SK-N-SH (cell line): ENCODE measurements at regions of chr2 and their contacts with region 1.

Region 1: DNA sequence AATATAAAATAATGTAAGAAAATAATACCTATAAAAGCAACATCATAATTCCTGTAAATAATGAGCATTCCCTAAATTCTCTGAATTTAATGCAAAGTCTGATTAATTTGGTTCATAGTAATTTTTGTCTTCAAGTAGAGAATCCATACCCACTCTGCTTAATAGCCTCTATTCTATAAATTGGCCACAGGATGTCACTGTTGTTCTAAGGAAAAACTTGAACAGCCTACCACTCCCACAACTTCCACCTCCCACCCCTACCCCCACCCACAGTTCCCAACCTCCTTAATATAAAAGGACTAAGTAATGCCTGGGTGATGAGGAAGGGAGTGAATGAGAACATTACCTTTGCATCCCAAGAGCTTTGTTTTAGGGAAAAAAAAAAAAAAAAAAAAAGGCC is 27.2 kb upstream of the BBS5 start:
- DNase-seq: peak; percentile 52
- H3K4me3 ChIP-seq: no peak overlapping the region
- H3K27ac ChIP-seq: no peak overlapping the region
- H3K4me1 ChIP-seq: no peaks in the 10 kb centered on the region
- H3K27me3 ChIP-seq: peaks cover 6% of the 10 kb centered on the region; the same call in 1 of the 2 replicates
- CTCF ChIP-seq: peak; percentile 62
- EP300 ChIP-seq: no peak
- RAD21 ChIP-seq: peak; percentile 72

Region 2: GRCh38 chr2:169462896-169463695 is 11.0 kb after region 1 on chr2:
- CTCF ChIA-PET with region 1: interaction called, 10 read pairs
- POLR2A ChIA-PET with region 1: no interaction called
- DNase-seq: no peak
- H3K4me3 ChIP-seq: 0 out of 4 replicates have a peak overlapping the region, but pooled peaks of 1 of the 2 experiments have one; percentile 23
- H3K27ac ChIP-seq: peak overlapping the region in 1 of 2 experiments; percentile 56; a peak in 2 of 4 replicates
- H3K4me1 ChIP-seq: peaks cover 0 to 3% of the 10 kb centered on the region in 2 experiments; a peak in 1 of 4 replicates
- H3K27me3 ChIP-seq: no peaks in the 10 kb centered on the region
- CTCF ChIP-seq: no peak
- EP300 ChIP-seq: no peak
- RAD21 ChIP-seq: no peak

Region 3: DNA sequence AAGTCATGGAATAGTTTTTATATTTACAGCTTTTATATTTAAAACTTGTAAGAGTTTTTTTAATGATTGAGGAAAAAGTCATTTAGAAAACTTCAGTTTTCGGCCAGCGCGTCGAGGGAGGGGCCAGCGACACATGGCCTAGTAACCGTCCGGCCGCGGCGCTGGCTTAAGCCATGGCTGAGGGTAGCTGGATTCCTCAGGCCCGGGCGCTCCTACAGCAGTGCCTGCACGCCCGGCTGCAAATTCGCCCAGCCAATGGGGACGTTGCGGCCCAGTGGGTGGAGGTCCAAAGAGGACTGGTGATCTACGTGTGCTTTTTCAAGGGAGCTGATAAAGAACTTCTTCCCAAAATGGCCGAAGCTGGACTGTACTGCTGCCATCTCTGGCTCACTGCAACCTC is 52.6 kb after region 1 on chr2:
- CTCF ChIA-PET with region 1: no interaction called
- POLR2A ChIA-PET with region 1: no interaction called
- DNase-seq: no peak
- H3K4me3 ChIP-seq: no peak overlapping the region
- H3K27ac ChIP-seq: no peak overlapping the region
- H3K4me1 ChIP-seq: 0 out of 4 replicates have a peak, but pooled peaks cover 0 to 7% of the 10 kb centered on the region in 2 experiments
- H3K27me3 ChIP-seq: no peaks in the 10 kb centered on the region
- CTCF ChIP-seq: no peak
- EP300 ChIP-seq: no peak
- RAD21 ChIP-seq: no peak

Region 4: DNA sequence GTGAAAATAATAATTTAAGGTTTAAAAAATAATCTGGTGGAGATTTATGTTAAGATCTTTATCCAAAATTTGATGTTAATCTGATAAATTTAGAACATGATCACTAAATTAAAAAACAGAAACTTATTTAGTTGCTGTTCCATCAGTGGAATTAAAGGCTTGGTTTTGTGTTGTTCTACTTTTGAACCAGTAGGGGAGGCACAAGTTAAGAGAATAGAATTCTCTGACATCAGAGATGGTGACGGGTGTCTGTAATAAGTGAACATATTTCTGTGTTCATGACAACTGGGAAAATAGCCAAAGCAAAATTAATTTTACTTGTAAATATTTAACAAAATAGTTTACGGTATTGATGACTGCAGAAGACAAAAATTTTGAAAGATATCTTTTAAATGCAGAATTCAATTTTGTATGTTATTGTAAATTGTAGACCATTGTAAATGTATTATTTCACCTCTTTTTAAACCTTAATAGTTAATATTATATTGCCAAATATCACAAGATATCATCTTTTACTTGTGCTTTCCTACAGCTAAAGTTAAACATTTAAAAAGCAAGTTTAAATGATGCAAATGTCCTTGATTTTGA is 481.1 kb after region 1 on chr2:
- CTCF ChIA-PET with region 1: interaction called, 13 read pairs
- POLR2A ChIA-PET with region 1: no interaction called
- DNase-seq: peak; percentile 54
- H3K4me3 ChIP-seq: peak overlapping the region in 1 of 2 experiments; percentile 32; a peak in 1 of 4 replicates
- H3K27ac ChIP-seq: no peak overlapping the region
- H3K4me1 ChIP-seq: no peaks in the 10 kb centered on the region; a peak in 1 of 4 replicates
- H3K27me3 ChIP-seq: no peaks in the 10 kb centered on the region
- CTCF ChIP-seq: peak; percentile 83
- EP300 ChIP-seq: no peak
- RAD21 ChIP-seq: peak; percentile 95